CD8-positive, alpha-beta T cell (primary cell): ENCODE measurements at regions of chr11 and their contacts with region 1.

Region 1: DNA sequence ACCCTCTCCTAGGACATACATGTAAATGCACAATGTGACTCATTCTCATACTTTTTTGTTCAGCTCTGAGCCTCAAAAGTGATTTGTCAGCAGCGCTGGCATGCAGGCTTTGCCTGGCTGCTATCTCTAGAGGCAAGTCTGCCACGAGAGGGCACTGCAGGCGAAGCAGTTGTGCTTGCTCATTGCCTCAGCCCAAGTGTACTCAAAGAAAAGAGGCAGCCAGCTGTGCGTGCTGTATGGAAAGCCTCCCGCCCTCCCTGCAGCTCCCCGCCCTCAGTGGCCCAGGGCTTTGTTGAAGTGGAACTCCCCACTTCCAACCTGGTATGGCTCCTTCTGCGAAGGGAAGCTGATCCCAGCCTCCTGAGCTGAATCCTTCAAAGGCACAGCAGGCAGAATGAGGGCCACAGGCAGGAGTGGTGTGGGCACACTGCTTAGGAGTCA is 16.3 kb downstream of the SDHAF2 start:
- DNase-seq: peak; percentile 35 to 74 (median 62)
- ATAC-seq: peak; percentile 93
- H3K4me3 ChIP-seq: no peak overlapping the region
- H3K4me3 Mint-ChIP-seq: no peak overlapping the region
- H3K27ac ChIP-seq: no peak overlapping the region
- H3K27ac Mint-ChIP-seq: no peak overlapping the region
- H3K4me1 ChIP-seq: no peaks in the 10 kb centered on the region
- H3K4me1 Mint-ChIP-seq: peaks cover 17% of the 10 kb centered on the region
- H3K27me3 ChIP-seq: no peaks in the 10 kb centered on the region
- H3K27me3 Mint-ChIP-seq: no peaks in the 10 kb centered on the region
- CTCF ChIP-seq: peak; percentile 45

Region 2: GRCh38 chr11:61460474-61460881 is 14.2 kb after region 1 on chr11:
- CTCF ChIA-PET with region 1: interaction called, 12 read pairs
- POLR2A ChIA-PET with region 1: no interaction called
- intact Hi-C with region 1: no loop called
- DNase-seq: no peak
- ATAC-seq: no peak
- H3K4me3 ChIP-seq: no peak overlapping the region
- H3K4me3 Mint-ChIP-seq: no peak overlapping the region
- H3K27ac ChIP-seq: no peak overlapping the region
- H3K27ac Mint-ChIP-seq: no peak overlapping the region
- H3K4me1 ChIP-seq: no peaks in the 10 kb centered on the region
- H3K4me1 Mint-ChIP-seq: peaks cover 7% of the 10 kb centered on the region
- H3K27me3 ChIP-seq: no peaks in the 10 kb centered on the region
- H3K27me3 Mint-ChIP-seq: no peaks in the 10 kb centered on the region
- CTCF ChIP-seq: no peak